Right ventricle myocardium inferior (tissue), 1 donor: ENCODE measurements at regions of chr10 and their contacts with region 1.

Region 1: DNA sequence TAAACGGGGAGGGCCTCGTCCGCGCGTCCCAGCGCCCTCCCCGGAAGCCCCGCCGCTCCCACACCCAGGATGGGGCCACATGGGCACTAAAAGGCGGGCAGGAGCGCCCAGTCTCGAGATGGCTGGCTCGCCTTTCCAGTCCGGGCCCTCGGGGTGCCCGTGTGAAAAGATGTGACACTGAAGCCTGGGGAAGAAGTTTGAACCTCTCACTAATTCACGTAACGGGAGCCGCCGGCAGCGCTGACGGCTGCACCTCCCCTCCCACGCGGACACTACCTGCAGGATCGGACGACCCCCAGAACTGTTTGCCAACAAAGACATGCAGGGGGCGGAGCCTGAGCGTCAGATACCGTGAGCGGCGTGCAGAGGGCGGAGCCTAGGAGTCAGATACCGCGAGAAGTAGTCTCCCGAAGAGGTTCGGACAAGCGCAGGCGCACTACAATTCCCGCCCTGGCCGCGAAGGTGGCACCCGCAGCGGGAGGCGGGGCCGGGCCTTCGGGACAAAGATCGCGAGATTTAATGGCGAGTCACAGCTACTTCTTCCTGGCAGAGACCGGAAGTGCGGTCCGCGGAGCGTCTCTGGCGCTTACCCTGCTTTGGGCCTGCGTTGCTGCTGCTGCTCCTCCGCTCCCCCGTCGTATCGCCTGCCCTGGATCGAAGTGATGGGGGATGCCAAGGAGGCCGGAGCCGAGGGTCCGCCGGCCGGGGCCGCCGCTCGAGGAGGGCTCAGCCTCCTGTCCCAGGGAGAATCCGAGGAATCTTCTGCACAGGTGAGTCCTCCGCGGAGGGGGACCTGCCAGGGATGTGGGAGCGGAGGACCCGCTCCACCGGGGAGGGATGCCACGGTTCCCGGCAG is at the start of gene EDRF1:
- DNase-seq: peak; percentile 99
- ATAC-seq: peak; percentile 100
- total RNA-seq, gene EDRF1: 9.6 TPM

Region 2: DNA sequence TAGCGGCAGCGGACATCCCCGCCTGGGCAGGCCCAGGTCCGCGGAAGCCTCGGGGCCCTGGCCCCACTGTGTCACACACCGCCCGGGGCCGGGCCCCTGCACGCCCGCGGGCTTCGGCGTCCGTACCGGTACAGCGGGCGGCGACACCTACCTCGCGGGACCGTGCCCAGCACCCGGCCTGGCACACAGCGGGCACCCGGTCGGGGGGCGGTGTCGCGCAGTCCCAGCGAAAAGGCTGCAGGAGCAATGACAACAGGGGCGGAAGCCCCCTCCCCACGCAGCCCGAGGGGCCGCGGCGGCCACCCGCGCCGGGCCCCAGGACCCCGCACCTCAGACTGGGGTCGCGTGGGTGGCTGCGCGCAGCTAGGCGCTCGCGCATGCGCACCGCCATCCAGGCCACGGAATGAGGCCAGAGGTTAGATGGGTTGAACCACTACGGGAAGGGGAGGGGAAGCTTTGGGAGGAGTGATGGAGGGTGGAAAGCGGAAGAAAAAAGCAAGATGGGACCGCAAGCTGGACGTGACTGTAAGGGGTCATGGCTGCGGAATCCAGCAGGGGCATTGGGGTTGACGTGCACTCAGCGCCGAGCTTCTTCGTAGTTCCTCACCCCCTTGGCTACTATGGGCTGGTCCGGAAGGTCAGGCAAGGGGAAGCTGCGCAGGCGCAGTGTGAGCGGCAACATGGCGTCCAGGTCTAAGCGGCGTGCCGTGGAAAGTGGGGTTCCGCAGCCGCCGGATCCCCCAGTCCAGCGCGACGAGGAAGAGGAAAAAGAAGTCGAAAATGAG is 103.7 kb after region 1 on chr10 and contains the starts of genes BCCIP and UROS:
- intact Hi-C with region 1: loop called (anchors 5 kb)
- DNase-seq: peak; percentile 97
- ATAC-seq: peak; percentile 94
- total RNA-seq, gene BCCIP: 38.4 TPM
- total RNA-seq, gene UROS: 71.8 TPM